IMR-90 (cell line): ENCODE measurements at regions of chr1 and their contacts with region 1.

Region 1: DNA sequence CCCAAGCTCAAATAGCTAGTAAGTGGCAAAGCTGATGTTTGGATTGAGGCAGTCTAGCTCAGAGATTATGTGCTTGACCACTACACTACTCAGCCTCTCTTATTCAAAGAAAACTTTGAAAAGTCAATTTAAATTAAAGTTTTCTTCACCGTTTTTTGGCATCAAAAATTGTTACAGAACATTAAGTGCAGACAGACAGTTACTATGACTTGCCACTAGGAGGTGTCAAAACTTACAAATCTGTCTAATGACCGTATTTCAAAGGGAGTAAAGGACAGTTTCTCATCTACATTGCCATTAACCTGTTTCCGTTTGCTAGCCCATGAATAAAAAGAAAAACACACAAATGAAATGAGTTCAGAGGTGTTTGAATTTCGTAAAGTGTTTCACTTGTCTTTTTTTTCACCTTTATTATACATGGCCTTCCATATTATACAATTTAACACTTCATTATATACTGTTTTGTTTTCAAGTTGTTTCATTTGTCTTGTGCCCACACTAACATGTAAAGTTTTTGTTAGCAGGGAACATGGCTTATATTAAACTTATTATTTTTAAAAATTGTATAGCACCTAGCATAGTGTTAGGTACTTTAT is 57.4 kb upstream of the MTF2 start:
- DNase-seq: peak; percentile 61
- ATAC-seq: peak; percentile 86
- H3K4me3 ChIP-seq: no peak overlapping the region
- H3K27ac ChIP-seq: no peak overlapping the region
- H3K4me1 ChIP-seq: peaks cover under 1% of the 10 kb centered on the region; the same call in 1 of the 2 replicates
- H3K27me3 ChIP-seq: peaks cover 28% of the 10 kb centered on the region
- CTCF ChIP-seq: peak; percentile 73
- POLR2A ChIP-seq: no peak
- RAD21 ChIP-seq: peak; percentile 67

Region 2: GRCh38 chr1:92968138-92969032 is 53.3 kb before region 1 on chr1:
- CTCF ChIA-PET with region 1: no interaction called
- POLR2A ChIA-PET with region 1: no interaction called
- dilution Hi-C with region 1: no loop called
- in situ Hi-C with region 1: no loop called
- intact Hi-C with region 1: loop called (anchors 2 kb)
- DNase-seq: no peak
- ATAC-seq: peak; percentile 65
- H3K4me3 ChIP-seq: no peak overlapping the region
- H3K27ac ChIP-seq: no peak overlapping the region
- H3K4me1 ChIP-seq: peaks cover 1% of the 10 kb centered on the region; the same call in 1 of the 2 replicates
- H3K27me3 ChIP-seq: peaks cover 19% of the 10 kb centered on the region
- CTCF ChIP-seq: peak; percentile 46
- POLR2A ChIP-seq: no peak
- RAD21 ChIP-seq: peak; percentile 33; the same call in 1 of the 2 replicates

Region 3: GRCh38 chr1:93061895-93062792 is 40.5 kb after region 1 on chr1:
- CTCF ChIA-PET with region 1: interaction called, 4 read pairs
- POLR2A ChIA-PET with region 1: no interaction called
- dilution Hi-C with region 1: no loop called
- in situ Hi-C with region 1: no loop called
- intact Hi-C with region 1: loop called (anchors 2 kb)
- DNase-seq: peak; percentile 36
- ATAC-seq: peak; percentile 80
- H3K4me3 ChIP-seq: no peak overlapping the region
- H3K27ac ChIP-seq: no peak overlapping the region
- H3K4me1 ChIP-seq: no peaks in the 10 kb centered on the region
- H3K27me3 ChIP-seq: peaks cover 19% of the 10 kb centered on the region
- CTCF ChIP-seq: peak; percentile 48
- POLR2A ChIP-seq: no peak
- RAD21 ChIP-seq: peak; percentile 43

Region 4: GRCh38 chr1:93878889-93879586 is 857.4 kb after region 1 on chr1 and contains the start of gene DNTTIP2:
- CTCF ChIA-PET with region 1: no interaction called
- POLR2A ChIA-PET with region 1: no interaction called
- dilution Hi-C with region 1: no loop called
- in situ Hi-C with region 1: loop called (anchors 25 kb)
- intact Hi-C with region 1: loop called (anchors 10 kb)
- DNase-seq: peak; percentile 87
- ATAC-seq: peak; percentile 94
- H3K4me3 ChIP-seq: peak within 1 kb of the TSS; percentile 89
- H3K27ac ChIP-seq: peak within 1 kb of the TSS; percentile 99
- H3K4me1 ChIP-seq: no peaks in the 10 kb centered on the region; the same call in 1 of the 2 replicates
- H3K27me3 ChIP-seq: no peaks in the 10 kb centered on the region
- CTCF ChIP-seq: no peak
- POLR2A ChIP-seq: peak; percentile 90
- RAD21 ChIP-seq: no peak
- total RNA-seq, gene DNTTIP2: 24.4 and 35.8 TPM in 2 replicates